HepG2 (cell line): ENCODE measurements at regions of chr5 and their contacts with region 1.

Region 1: GRCh38 chr5:150409638-150410523 is 2.8 kb downstream of the CD74 start:
- DNase-seq: peak; percentile 77
- ATAC-seq: peak; percentile 83
- H3K4me3 ChIP-seq: peak overlapping the region in 1 of 3 experiments; percentile 12; a peak in 1 of 6 replicates
- H3K27ac ChIP-seq: no peak overlapping the region
- H3K4me1 ChIP-seq: peaks cover 38% of the 10 kb centered on the region
- H3K27me3 ChIP-seq: no peaks in the 10 kb centered on the region
- CTCF ChIP-seq: no peak
- EP300 ChIP-seq: no peak
- POLR2A ChIP-seq: no peak
- RAD21 ChIP-seq: no peak

Region 2: DNA sequence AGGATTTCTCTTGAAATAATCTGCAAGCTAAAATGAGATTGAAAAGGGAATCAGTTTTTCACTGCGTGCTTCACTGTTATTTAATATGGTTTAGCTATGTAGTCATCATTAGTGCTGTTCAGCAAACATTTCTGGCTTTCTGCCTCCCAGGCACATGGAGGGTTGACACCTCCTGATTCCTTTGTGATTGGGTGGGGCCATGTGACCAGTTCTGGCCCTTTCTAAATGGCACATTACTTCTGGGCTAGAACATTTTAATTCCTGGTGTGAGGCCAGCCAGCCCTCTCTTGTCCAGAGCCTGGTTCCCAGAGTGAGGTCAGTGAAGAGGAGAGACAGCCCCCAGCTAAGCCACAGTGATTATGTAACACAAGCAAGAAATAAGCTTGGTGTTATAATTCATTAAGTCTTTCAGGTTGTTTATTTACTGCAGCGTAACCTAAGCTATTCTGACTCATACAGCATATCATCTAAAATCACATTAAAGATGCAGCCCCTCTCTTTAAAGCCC is 89.8 kb before region 1 on chr5:
- CTCF ChIA-PET with region 1: no interaction called
- POLR2A ChIA-PET with region 1: no interaction called
- in situ Hi-C with region 1: no loop called
- intact Hi-C with region 1: no loop called
- DNase-seq: no peak
- ATAC-seq: no peak
- H3K4me3 ChIP-seq: no peak overlapping the region
- H3K27ac ChIP-seq: no peak overlapping the region
- H3K4me1 ChIP-seq: peaks cover 55% of the 10 kb centered on the region
- H3K27me3 ChIP-seq: no peaks in the 10 kb centered on the region
- CTCF ChIP-seq: no peak
- EP300 ChIP-seq: no peak
- POLR2A ChIP-seq: no peak
- RAD21 ChIP-seq: no peak

Region 3: DNA sequence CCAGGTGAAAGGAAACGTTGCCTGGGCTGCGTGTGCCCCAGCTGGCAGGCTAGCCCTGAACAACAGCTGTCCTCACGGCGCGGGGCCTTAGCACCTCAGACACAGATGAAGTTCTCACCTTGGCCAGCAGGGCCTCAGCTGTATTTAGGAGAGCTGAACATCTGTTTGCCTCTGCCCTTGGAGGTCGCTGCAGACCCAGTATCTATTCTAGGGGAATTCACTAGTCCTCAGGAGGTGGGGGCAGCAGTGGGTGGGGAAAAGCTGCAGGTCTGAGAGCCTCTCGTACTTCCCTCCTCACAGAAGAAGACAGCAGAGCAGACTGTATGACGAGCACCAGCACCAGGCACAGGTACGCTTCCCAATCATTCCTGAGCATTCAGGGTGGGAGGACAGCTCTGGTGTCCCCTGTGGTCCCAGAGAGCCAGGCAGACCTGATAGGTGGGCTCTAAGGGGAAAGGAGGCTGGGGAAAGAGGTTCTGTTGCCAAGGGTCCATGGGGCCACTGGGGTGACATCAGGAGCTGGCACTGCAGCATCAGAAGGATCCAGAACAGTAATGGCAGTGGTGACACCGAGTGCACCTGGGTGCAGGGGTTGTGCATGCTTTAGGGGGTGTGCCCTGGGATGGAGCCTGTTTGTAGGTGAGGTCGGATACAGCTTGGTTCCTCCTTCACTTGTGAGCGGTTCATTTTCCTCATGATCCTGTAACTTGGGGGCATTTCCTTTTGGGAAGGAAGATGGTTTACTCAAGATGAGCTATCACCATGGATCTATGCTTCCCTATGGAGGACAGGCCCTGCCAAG is 11.0 kb before region 1 on chr5:
- CTCF ChIA-PET with region 1: no interaction called
- POLR2A ChIA-PET with region 1: interaction called, 11 read pairs
- in situ Hi-C with region 1: no loop called
- intact Hi-C with region 1: no loop called
- DNase-seq: no peak
- ATAC-seq: peak; percentile 71
- H3K4me3 ChIP-seq: no peak overlapping the region
- H3K27ac ChIP-seq: no peak overlapping the region
- H3K4me1 ChIP-seq: no peaks in the 10 kb centered on the region
- H3K27me3 ChIP-seq: no peaks in the 10 kb centered on the region
- CTCF ChIP-seq: no peak
- EP300 ChIP-seq: no peak
- POLR2A ChIP-seq: no peak; a peak in 1 of 4 replicates
- RAD21 ChIP-seq: no peak

Region 4: GRCh38 chr5:150428106-150428876 is 18.4 kb after region 1 on chr5:
- CTCF ChIA-PET with region 1: no interaction called
- POLR2A ChIA-PET with region 1: interaction called, 33 read pairs
- in situ Hi-C with region 1: no loop called
- intact Hi-C with region 1: loop called (anchors 2 kb)
- DNase-seq: peak; percentile 83
- ATAC-seq: peak; percentile 90
- H3K4me3 ChIP-seq: peak overlapping the region; percentile 49 to 71 (median 56)
- H3K27ac ChIP-seq: peak overlapping the region; percentile 89
- H3K4me1 ChIP-seq: peaks cover 45% of the 10 kb centered on the region
- H3K27me3 ChIP-seq: no peaks in the 10 kb centered on the region; a peak in 1 of 5 replicates
- CTCF ChIP-seq: no peak
- EP300 ChIP-seq: no peak
- POLR2A ChIP-seq: peak; percentile 81 to 85
- RAD21 ChIP-seq: peak; percentile 39; the same call in 1 of the 2 replicates

Region 5: DNA sequence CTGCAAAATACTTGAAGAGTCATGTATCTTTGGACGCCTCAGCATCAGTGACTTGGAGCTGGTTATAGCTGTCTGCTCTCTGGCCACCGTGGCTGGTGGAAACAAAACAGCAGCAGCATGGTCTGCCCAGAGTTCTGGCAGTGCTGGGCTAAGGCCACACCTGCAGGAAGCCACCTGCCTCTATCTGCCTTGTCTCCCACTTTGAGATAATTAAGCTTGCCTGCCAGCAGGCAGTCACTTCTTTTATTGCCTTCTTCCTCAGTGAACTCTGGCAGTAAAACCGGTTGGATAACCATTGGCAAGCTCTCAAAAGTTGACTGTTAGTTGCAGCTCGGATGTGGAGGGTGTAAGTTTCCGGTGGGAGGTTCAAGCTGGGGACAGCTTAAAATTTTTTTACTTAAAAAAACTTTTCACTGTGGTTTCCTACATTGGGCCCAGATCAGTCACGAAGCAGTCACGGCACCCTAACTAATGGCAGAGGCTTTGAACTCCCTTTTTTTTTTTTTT is 373.6 kb after region 1 on chr5:
- CTCF ChIA-PET with region 1: no interaction called
- POLR2A ChIA-PET with region 1: no interaction called
- in situ Hi-C with region 1: no loop called
- intact Hi-C with region 1: no loop called
- DNase-seq: no peak
- ATAC-seq: no peak
- H3K4me3 ChIP-seq: peak overlapping the region in 1 of 3 experiments; percentile 90; a peak in 1 of 6 replicates
- H3K27ac ChIP-seq: peak overlapping the region; percentile 30
- H3K4me1 ChIP-seq: peaks cover 81% of the 10 kb centered on the region
- H3K27me3 ChIP-seq: no peaks in the 10 kb centered on the region; a peak in 1 of 5 replicates
- CTCF ChIP-seq: no peak
- EP300 ChIP-seq: no peak
- POLR2A ChIP-seq: no peak
- RAD21 ChIP-seq: no peak